Endothelial cell of umbilical vein (primary cell): ENCODE measurements at regions of chr12 and their contacts with region 1.

Region 1: GRCh38 chr12:5648692-5649359 is 216.9 kb downstream of the NTF3 start:
- DNase-seq: no peak
- H3K4me3 ChIP-seq: no peak overlapping the region
- H3K27ac ChIP-seq: no peak overlapping the region
- H3K4me1 ChIP-seq: no peaks in the 10 kb centered on the region
- H3K27me3 ChIP-seq: no peaks in the 10 kb centered on the region
- CTCF ChIP-seq: peak; percentile 23 to 30
- POLR2A ChIP-seq: no peak

Region 2: GRCh38 chr12:5428332-5429221 is 220.2 kb before region 1 on chr12:
- CTCF ChIA-PET with region 1: interaction called, 22 read pairs
- POLR2A ChIA-PET with region 1: no interaction called
- dilution Hi-C with region 1: no loop called
- intact Hi-C with region 1: loop called (anchors 2 kb)
- DNase-seq: peak; percentile 50
- H3K4me3 ChIP-seq: no peak overlapping the region
- H3K27ac ChIP-seq: no peak overlapping the region
- H3K4me1 ChIP-seq: peaks cover 7% of the 10 kb centered on the region
- H3K27me3 ChIP-seq: peaks cover 62 to 81% of the 10 kb centered on the region in 2 experiments
- CTCF ChIP-seq: peak; percentile 39 to 53
- POLR2A ChIP-seq: no peak

Region 3: DNA sequence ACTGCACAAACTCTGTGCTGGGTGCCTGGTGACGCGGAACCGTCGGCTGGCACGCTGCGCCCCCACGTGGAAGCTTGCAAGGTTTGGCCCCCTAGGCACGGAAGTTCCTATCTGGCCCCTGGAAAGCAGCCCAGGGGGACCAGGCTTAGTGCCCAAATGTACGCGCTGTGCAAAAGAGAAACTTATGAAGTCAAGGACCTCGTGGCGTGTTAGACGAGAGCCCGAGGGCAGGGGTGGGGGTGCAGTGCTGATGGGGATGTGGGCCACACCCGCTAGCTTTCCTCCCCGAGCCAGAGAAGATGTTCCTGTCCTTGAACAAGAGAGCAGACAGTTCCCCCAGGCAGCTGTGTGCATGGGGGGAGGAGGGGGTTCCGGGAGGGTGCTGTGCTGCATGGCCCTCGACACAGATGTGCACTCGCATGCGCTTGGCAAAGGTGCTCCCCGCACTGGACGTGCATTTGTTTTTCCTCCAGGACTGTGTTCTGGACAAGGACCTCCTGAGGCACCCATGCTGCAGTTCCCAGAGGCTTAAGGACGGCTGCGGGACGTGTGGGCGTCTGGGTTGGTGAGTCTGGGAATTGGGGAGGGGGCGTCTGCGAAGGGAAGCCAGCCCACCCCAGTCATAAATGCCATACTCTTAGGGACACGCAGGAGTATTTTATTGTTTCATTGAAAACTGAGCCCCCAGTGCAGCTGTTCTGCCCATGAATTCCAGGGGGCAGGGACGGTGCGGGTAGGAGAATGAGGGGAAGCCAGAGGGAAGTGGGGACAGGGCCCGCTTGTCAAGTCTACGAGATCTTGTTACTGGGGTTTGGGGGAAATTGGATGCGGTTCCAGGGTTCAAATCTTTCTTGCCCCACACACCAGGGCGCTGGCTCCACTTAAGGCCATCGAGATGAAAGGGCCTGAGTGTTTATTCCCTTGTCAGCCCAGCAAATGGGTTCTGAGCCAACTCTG is 136.9 kb before region 1 on chr12:
- CTCF ChIA-PET with region 1: interaction called, 13 read pairs
- POLR2A ChIA-PET with region 1: no interaction called
- dilution Hi-C with region 1: no loop called
- intact Hi-C with region 1: no loop called
- DNase-seq: peak; percentile 26
- H3K4me3 ChIP-seq: no peak overlapping the region
- H3K27ac ChIP-seq: no peak overlapping the region
- H3K4me1 ChIP-seq: no peaks in the 10 kb centered on the region
- H3K27me3 ChIP-seq: peaks cover 11 to 15% of the 10 kb centered on the region in 2 experiments
- CTCF ChIP-seq: peak; percentile 63 to 80
- POLR2A ChIP-seq: no peak

Region 4: GRCh38 chr12:5562581-5562980 is 86.2 kb before region 1 on chr12:
- CTCF ChIA-PET with region 1: interaction called, 10 read pairs
- POLR2A ChIA-PET with region 1: no interaction called
- dilution Hi-C with region 1: no loop called
- intact Hi-C with region 1: no loop called
- DNase-seq: no peak
- H3K4me3 ChIP-seq: no peak overlapping the region
- H3K27ac ChIP-seq: no peak overlapping the region
- H3K4me1 ChIP-seq: no peaks in the 10 kb centered on the region
- H3K27me3 ChIP-seq: no peaks in the 10 kb centered on the region
- CTCF ChIP-seq: no peak
- POLR2A ChIP-seq: no peak